ENCODE measurements at regions of chr1 and their contacts with region 1.

Region 1: DNA sequence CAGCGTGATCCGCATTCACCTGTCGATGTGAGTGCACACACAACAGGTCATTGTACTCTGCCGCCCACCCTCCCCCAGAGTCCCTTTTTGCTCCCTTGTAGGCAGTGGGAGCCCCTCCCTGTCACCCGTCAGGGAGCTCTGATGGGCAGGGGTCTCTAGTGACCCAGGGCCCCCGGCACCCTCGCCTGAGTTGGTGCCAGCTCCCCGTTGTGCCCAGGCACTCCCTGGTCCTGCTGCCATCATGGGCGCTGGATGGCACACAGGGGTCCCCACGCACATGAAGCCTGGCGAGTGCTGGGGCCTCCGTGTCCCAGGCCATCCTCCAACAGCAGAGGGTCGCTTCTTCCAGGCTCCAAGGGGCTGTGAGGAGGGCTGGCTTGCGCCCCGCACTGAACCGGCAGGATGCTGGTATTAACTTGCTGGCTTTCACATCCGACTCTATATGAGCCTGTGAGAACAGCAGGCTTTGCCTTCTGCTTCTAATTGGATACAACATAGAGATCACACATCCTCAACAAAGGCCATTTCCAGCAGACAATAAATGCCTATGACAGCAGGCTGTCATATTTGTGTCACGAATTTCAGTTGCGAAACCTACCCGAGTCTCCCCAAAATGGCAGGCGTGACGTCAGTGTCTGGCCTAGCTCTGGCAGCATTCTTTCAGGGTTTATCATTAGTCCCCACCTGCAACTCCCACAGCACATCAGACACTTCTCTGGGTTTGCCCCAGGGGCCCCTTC is 35.4 kb downstream of the KIAA1614 start:
- DNase-seq: no peak
- H3K4me3 ChIP-seq: no peak overlapping the region
- H3K27ac ChIP-seq: no peak overlapping the region
- H3K4me1 ChIP-seq: peaks cover under 1% of the 10 kb centered on the region
- H3K27me3 ChIP-seq: no peaks in the 10 kb centered on the region
- CTCF ChIP-seq: no peak

Region 2: DNA sequence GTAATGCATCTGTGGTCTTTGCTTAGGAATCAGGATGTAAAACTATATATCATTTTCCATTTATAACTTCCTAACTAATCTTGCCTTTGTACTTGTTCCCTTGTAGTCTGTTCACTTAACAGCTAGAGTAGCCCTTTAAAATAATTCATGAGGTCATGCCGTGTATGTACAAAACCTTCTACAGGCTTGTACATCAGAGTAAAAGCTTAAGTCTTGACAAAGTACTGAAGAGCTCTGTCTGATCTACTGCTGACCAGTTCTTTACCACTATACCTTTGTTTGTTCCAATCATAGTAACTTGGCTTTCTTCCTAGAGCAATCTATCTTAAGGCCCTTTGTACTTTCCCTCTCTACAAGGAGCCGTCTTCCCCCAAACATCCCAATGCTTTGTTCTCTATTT is 126.1 kb before region 1 on chr1:
- CTCF ChIA-PET with region 1: interaction called, 10 read pairs
- dilution Hi-C with region 1: no loop called
- in situ Hi-C with region 1: no loop called
- intact Hi-C with region 1: no loop called
- DNase-seq: no peak
- H3K4me3 ChIP-seq: no peak overlapping the region
- H3K27ac ChIP-seq: no peak overlapping the region
- H3K4me1 ChIP-seq: no peaks in the 10 kb centered on the region
- H3K27me3 ChIP-seq: no peaks in the 10 kb centered on the region
- CTCF ChIP-seq: no peak

Region 3: GRCh38 chr1:180969434-180969833 is 21.4 kb after region 1 on chr1:
- CTCF ChIA-PET with region 1: no interaction called
- dilution Hi-C with region 1: no loop called
- in situ Hi-C with region 1: no loop called
- intact Hi-C with region 1: no loop called
- DNase-seq: no peak
- H3K4me3 ChIP-seq: no peak overlapping the region
- H3K27ac ChIP-seq: no peak overlapping the region
- H3K4me1 ChIP-seq: no peaks in the 10 kb centered on the region
- H3K27me3 ChIP-seq: no peaks in the 10 kb centered on the region
- CTCF ChIP-seq: no peak

Region 4: DNA sequence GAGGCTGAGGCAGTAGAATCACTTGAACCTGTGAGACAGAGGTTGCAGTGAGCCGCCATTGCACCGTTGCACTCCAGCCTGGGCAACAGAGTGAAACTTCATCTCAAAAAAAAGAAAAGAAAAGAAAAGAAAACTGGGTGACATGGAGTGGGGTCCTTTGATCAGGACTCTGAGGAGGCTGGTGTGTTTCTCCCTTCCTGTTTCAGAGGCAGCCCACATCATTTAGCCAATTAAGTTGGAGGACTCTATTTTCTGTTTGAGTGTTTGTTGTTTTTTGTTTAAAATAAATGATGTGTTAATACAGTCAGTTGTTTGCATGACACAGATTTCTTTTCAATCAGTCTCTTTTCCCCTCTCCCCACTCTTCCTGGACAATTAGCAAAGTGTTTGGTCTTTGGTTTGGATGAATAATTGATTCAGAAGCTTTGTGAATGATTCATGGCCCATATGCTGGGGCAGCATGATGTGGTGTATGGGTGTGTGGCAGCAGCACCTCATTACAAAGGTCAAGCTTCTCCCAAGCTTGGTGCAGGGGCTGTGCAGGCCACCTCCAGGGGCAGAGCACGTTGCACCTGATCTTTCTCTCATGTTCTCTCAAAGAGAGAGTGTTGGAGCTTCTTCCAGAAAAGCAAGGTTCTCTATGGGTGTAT is 584.0 kb after region 1 on chr1:
- CTCF ChIA-PET with region 1: no interaction called
- dilution Hi-C with region 1: no loop called
- in situ Hi-C with region 1: no loop called
- intact Hi-C with region 1: no loop called
- DNase-seq: no peak
- H3K4me3 ChIP-seq: no peak overlapping the region
- H3K27ac ChIP-seq: no peak overlapping the region
- H3K4me1 ChIP-seq: no peaks in the 10 kb centered on the region
- H3K27me3 ChIP-seq: no peaks in the 10 kb centered on the region
- CTCF ChIP-seq: no peak

Measured in mammary epithelial cell (primary cell).